ENCODE measurements at regions of chr1 and their contacts with region 1.

Region 1: DNA sequence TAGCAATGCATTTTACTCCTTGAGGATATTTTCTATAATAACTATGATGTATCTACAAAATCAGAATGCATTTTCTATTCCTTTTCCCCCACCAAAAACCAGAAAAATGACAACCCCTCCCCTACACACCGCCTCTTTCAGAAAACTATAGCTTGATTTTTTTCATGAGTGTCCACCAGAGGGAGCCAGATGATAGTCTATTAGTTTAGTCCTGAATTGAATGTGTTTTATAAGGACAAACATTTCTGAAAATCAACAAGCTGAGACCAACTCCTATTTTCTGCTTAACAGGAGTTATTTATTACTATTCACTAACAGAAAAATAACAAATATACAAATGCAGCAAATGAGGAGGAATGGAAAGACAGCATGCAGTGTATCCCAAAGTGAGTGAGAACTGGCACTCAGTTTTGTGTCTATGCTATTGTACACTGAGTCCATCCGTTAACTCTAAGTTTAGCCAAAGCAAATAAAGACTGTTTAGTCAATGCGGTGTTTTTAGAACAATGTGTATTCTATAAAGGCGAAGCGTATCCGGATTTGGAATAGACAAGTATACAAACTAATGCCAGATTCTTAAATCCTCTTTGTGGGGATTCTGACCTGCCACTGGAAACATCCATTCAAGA is 182.6 kb downstream of the VAV3 start:
- H3K4me3 ChIP-seq: no peak overlapping the region
- H3K27ac ChIP-seq: no peak overlapping the region
- H3K4me1 ChIP-seq: no peaks in the 10 kb centered on the region
- CTCF ChIP-seq: peak; percentile 42; the same call in 1 of the 2 replicates

Region 2: GRCh38 chr1:107617456-107618320 is 164.6 kb before region 1 on chr1:
- CTCF ChIA-PET with region 1: no interaction called
- POLR2A ChIA-PET with region 1: no interaction called
- H3K4me3 ChIP-seq: no peak overlapping the region
- H3K27ac ChIP-seq: no peak overlapping the region
- H3K4me1 ChIP-seq: no peaks in the 10 kb centered on the region
- CTCF ChIP-seq: no peak

Region 3: GRCh38 chr1:107795994-107796393 is 13.7 kb after region 1 on chr1:
- CTCF ChIA-PET with region 1: interaction called, 24 read pairs
- POLR2A ChIA-PET with region 1: no interaction called
- H3K4me3 ChIP-seq: no peak overlapping the region
- H3K27ac ChIP-seq: no peak overlapping the region
- H3K4me1 ChIP-seq: peaks cover 3% of the 10 kb centered on the region
- CTCF ChIP-seq: no peak

Region 4: GRCh38 chr1:108118018-108118902 is 335.9 kb after region 1 on chr1:
- CTCF ChIA-PET with region 1: interaction called, 287 read pairs
- POLR2A ChIA-PET with region 1: no interaction called
- H3K4me3 ChIP-seq: no peak overlapping the region
- H3K27ac ChIP-seq: no peak overlapping the region
- H3K4me1 ChIP-seq: no peaks in the 10 kb centered on the region
- CTCF ChIP-seq: no peak

Region 5: GRCh38 chr1:108125312-108126138 is 343.2 kb after region 1 on chr1:
- CTCF ChIA-PET with region 1: interaction called, 287 read pairs
- POLR2A ChIA-PET with region 1: interaction called, 4 read pairs
- H3K4me3 ChIP-seq: no peak overlapping the region
- H3K27ac ChIP-seq: 0 out of 2 replicates have a peak overlapping the region, but pooled peaks have one; percentile 3
- H3K4me1 ChIP-seq: peaks cover 12% of the 10 kb centered on the region
- CTCF ChIP-seq: peak; percentile 93

Region 6: DNA sequence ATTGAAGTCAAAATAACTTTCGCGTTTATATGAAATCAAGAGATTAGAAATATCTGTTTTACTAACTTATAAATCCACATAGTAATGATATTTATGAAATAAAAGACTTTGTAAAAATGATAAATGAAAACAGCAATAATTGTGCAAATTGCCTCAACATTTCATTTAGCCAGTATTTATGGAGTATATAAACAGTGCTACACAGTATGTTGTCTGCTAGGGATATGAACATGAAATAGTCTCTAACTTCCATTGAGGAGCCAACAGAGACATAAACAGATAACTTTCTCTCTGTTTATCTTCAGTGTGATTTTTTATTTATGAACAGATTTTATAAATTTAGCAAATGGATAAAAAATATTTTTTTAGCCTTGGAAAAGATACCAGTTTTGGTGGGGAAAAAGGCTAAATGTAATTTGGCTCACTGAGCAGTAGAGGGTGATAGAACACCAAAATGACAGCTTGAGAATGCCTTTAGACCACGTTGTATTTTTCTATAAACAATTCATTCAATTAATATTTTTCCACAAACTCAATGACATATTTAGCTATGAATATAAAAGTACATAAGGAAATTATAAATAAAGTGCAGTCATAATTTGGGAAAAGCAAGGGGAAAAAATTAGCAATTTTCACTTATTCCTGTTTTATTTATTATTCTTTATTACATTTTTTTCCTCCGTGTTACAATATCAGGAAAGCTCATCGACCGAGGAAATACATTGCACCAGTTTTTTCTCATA is 730.1 kb after region 1 on chr1:
- CTCF ChIA-PET with region 1: interaction called, 14 read pairs
- POLR2A ChIA-PET with region 1: no interaction called
- H3K4me3 ChIP-seq: no peak overlapping the region
- H3K27ac ChIP-seq: no peak overlapping the region
- H3K4me1 ChIP-seq: no peaks in the 10 kb centered on the region
- CTCF ChIP-seq: peak; percentile 40

Measured in HEK293 (cell line).